ENCODE measurements at regions of chr7 and their contacts with region 1.

Region 1: GRCh38 chr7:142508258-142508689 is 241.0 kb upstream of the PRSS1 start:
- DNase-seq: peak; percentile 78 to 99
- H3K4me3 ChIP-seq: no peak overlapping the region; the same call in 1 of the 2 replicates
- H3K27ac ChIP-seq: peak overlapping the region; percentile 90
- H3K4me1 ChIP-seq: peaks cover 29% of the 10 kb centered on the region
- H3K27me3 ChIP-seq: no peaks in the 10 kb centered on the region
- CTCF ChIP-seq: no peak

Region 2: GRCh38 chr7:142104550-142105527 is 403.4 kb before region 1 on chr7:
- CTCF ChIA-PET with region 1: no interaction called
- POLR2A ChIA-PET with region 1: no interaction called
- intact Hi-C with region 1: loop called (anchors 5 kb)
- DNase-seq: peak; percentile 71 to 99
- H3K4me3 ChIP-seq: no peak overlapping the region
- H3K27ac ChIP-seq: peak overlapping the region; percentile 87
- H3K4me1 ChIP-seq: peaks cover 32% of the 10 kb centered on the region
- H3K27me3 ChIP-seq: no peaks in the 10 kb centered on the region
- CTCF ChIP-seq: no peak

Region 3: GRCh38 chr7:142471820-142472219 is 36.5 kb before region 1 on chr7:
- CTCF ChIA-PET with region 1: no interaction called
- POLR2A ChIA-PET with region 1: no interaction called
- intact Hi-C with region 1: loop called (anchors 1 kb)
- DNase-seq: no peak
- H3K4me3 ChIP-seq: no peak overlapping the region
- H3K27ac ChIP-seq: no peak overlapping the region
- H3K4me1 ChIP-seq: no peaks in the 10 kb centered on the region
- H3K27me3 ChIP-seq: no peaks in the 10 kb centered on the region
- CTCF ChIP-seq: no peak

Region 4: DNA sequence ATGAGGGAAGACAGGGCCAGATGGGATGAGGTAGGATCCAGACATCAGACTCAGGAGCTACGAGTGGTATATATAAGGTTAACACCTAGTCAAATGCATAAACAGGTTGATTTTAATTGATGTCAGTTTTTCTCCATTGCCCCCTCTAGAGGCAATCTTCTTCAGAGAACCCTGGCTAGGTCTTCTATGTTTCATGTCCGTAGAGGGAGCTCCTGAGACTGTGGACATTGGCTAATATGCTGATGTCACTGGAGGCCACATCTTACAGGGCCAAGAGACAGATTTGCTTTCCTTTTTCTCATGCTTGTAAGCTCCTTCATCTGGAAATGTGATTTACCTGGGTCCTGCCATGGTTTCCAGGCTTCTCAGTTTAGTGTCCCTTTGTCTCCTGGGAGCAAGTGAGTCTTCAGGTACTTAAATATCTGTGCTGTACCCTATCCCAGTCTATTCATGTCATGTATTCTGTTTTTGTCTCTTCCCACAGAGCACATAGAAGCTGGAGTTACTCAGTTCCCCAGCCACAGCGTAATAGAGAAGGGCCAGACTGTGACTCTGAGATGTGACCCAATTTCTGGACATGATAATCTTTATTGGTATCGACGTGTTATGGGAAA is 79.4 kb after region 1 on chr7:
- CTCF ChIA-PET with region 1: interaction called, 3 read pairs
- POLR2A ChIA-PET with region 1: interaction called, 10 read pairs
- intact Hi-C with region 1: no loop called
- DNase-seq: peak; percentile 30 to 77
- H3K4me3 ChIP-seq: no peak overlapping the region
- H3K27ac ChIP-seq: 0 out of 2 replicates have a peak overlapping the region, but pooled peaks have one; percentile 27
- H3K4me1 ChIP-seq: peaks cover 26% of the 10 kb centered on the region
- H3K27me3 ChIP-seq: no peaks in the 10 kb centered on the region
- CTCF ChIP-seq: peak; percentile 78

Region 5: GRCh38 chr7:143248761-143249354 is 740.6 kb after region 1 on chr7:
- CTCF ChIA-PET with region 1: interaction called, 13 read pairs
- POLR2A ChIA-PET with region 1: no interaction called
- intact Hi-C with region 1: no loop called
- DNase-seq: peak; percentile 91 to 100
- H3K4me3 ChIP-seq: peak overlapping the region; percentile 32; the same call in 1 of the 2 replicates
- H3K27ac ChIP-seq: peak overlapping the region; percentile 95
- H3K4me1 ChIP-seq: peaks cover 76% of the 10 kb centered on the region
- H3K27me3 ChIP-seq: no peaks in the 10 kb centered on the region
- CTCF ChIP-seq: no peak